BJ (cell line): ENCODE measurements at regions of chr7 and their contacts with region 1.

Region 1: DNA sequence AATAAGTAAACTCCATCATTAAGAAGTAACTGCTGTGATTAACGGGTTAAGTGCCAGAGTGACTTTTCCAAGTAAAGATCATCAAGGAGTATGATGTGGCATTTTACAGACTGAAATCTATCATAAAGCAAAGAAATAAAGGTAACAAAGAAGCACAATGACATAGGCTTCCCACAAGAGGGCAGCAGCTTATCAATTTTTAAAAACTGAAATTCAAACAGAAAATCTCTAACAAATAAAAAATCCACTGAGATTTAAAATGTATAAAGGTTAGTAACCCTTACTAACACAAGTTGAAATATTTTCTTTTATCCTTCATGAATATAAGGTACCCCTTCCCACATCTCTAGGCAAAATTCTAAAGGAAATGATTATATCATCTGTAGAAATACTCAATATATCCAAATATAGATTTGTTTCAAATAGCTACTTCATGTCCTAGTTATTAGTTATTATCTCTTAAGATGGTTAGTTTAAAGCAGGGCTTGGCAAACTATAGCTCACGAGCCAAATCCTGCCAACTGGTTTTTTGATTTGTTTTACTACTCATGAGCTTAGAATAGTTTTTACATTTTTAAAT is 29.2 kb downstream of the FAM3C start:
- DNase-seq: no peak
- H3K4me3 ChIP-seq: no peak overlapping the region
- H3K27me3 ChIP-seq: no peaks in the 10 kb centered on the region
- CTCF ChIP-seq: peak; percentile 67

Region 2: GRCh38 chr7:121351679-121352078 is 15.3 kb before region 1 on chr7:
- CTCF ChIA-PET with region 1: interaction called, 11 read pairs
- POLR2A ChIA-PET with region 1: no interaction called
- DNase-seq: no peak
- H3K4me3 ChIP-seq: no peak overlapping the region
- H3K27me3 ChIP-seq: no peaks in the 10 kb centered on the region
- CTCF ChIP-seq: no peak

Region 3: DNA sequence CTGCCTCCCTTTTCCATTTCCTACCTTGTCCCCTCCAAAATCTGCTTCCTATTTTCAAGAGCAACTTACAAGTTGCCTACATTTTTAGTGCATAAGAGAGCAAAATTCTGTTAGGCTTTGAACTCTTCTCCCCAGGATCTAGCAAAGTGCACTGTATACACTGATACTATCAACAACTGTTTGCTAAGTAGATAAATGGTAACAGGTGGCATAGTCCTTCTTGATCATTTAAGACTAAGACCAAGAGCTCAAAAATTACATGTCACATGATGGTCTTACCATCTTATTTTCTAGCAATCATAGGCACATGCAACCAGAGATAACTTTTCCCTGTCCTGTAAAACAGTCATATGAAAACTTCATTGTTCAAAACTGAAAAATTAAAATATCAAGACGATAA is 13.0 kb after region 1 on chr7:
- CTCF ChIA-PET with region 1: interaction called, 10 read pairs
- POLR2A ChIA-PET with region 1: no interaction called
- DNase-seq: no peak
- H3K4me3 ChIP-seq: no peak overlapping the region
- H3K27me3 ChIP-seq: no peaks in the 10 kb centered on the region
- CTCF ChIP-seq: no peak

Region 4: GRCh38 chr7:121547544-121548092 is 180.7 kb after region 1 on chr7:
- CTCF ChIA-PET with region 1: interaction called, 57 read pairs
- POLR2A ChIA-PET with region 1: no interaction called
- DNase-seq: no peak
- H3K4me3 ChIP-seq: no peak overlapping the region
- H3K27me3 ChIP-seq: no peaks in the 10 kb centered on the region
- CTCF ChIP-seq: peak; percentile 68

Region 5: DNA sequence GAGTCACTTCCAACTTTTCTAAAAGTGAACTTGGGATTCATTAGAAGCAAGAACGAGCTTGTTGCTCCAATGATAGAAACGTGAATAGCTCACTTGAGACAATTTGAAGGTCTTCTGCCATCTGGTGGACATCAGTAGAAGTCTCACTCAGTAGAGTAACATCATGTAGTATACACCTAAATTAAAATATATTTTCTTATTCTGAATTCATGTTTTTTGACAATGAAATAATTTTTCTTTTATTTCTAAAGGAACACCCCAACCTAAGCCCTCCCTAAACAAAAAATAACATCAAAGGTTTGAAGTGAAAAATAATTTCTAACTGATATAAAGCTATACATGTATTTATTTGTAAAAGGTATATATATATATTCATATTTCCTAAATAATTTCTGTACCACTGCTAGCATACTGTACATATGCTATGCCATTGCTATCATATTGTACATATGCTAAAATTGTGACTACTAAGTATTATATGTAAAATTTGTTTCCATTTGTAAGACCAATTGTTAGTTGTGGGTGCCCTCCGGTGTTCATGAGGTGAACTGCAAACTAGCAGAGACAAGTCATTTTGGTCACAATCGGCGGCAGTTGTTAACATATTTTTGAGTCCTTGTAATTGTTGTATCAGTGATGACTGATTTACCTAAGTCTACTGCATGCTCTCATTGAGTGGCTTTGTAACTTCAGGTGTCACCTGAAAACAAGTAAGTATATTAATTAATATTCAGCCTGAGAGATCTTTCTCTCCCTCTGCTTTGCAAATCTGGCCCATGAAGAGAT is 627.9 kb after region 1 on chr7:
- CTCF ChIA-PET with region 1: interaction called, 12 read pairs
- POLR2A ChIA-PET with region 1: no interaction called
- DNase-seq: peak; percentile 16
- H3K4me3 ChIP-seq: no peak overlapping the region
- H3K27me3 ChIP-seq: no peaks in the 10 kb centered on the region
- CTCF ChIP-seq: peak; percentile 80